ENCODE measurements at regions of chr1 and their contacts with region 1.

Region 1: DNA sequence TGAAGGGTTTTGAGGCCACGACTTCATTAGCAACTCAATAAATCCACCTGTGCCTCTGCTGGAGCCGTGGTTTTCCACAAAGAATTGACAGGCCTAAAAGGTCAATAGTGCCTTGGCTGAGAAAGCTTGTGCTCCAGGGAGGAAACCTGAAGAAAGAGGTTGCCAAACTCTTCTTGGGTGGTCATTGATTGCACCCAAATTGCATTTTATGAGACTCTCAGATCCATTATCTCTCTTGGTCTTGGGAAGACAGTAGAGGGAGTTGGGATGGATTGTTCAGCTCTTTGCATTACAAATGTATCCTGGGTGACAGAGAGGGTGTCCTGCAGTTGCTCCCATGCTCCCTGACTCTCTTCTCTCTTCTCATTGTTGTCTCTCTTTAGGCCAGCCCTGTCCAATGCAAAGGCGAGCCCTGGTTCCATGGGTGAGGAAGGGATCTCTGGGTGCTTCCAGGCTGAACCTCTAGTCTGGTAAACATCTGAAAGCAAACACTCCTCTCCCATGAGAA is 46.1 kb upstream of the HTR1D start:
- DNase-seq: no peak
- H3K4me3 ChIP-seq: no peak overlapping the region
- H3K27ac ChIP-seq: no peak overlapping the region
- H3K4me1 ChIP-seq: no peaks in the 10 kb centered on the region
- H3K27me3 ChIP-seq: no peaks in the 10 kb centered on the region
- CTCF ChIP-seq: no peak
- POLR2A ChIP-seq: no peak

Region 2: DNA sequence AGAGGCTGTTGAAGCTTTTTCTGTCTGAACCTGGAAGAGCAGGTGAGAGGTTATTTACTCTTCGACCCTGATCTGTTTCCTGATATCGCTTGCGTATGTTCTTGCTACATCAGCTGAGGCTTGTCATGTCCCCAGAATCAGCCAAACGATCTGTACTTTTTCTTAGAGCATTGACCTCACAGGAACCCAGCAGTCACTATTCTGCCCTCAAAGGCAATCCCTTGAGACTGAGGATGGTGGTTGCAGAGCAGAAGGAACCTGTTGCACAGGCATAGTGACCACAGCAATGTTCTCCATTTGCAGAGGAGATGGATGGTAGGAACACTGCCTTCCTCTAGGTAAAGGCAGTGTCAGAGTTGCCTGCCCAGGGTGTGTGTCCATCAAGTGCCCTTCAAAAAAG is 279.5 kb before region 1 on chr1:
- intact Hi-C with region 1: loop called (anchors 10 kb)
- DNase-seq: no peak
- H3K4me3 ChIP-seq: no peak overlapping the region
- H3K27ac ChIP-seq: no peak overlapping the region
- H3K4me1 ChIP-seq: no peaks in the 10 kb centered on the region
- H3K27me3 ChIP-seq: no peaks in the 10 kb centered on the region
- CTCF ChIP-seq: no peak
- POLR2A ChIP-seq: no peak

Region 3: DNA sequence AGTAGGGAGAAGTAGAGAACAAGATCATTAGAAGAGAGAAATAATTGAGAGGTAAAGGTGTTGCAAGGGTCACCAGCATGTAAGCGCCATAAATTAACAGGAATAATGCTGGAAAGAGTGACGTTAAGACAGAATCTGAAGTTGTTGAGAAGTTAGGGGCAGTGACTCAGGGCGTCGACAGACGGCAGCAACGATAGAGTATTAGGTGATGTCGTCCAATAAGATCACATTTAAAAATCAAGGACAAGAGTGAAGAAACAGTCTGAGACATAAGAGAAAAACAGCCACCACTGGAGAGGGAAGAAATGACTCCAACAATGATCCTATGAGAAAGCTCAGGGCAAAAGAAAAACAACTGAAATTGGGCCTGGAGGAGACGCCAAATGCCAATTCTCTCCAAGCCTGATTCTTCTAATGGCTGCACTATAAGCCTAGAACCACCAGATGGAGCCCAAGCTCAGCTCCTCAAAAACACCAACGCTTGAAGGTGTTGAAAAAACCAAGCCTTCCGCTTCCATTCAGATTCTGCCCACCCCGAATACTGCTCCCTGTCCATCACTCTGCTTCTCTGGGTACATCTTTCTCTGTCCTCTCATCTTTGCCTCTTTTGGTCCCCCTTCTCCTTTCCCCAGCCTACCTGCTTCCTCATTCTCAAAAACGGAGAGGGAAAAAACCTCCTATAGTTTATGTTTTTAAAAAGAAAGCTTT is 164.8 kb before region 1 on chr1:
- intact Hi-C with region 1: no loop called
- DNase-seq: no peak
- H3K4me3 ChIP-seq: no peak overlapping the region
- H3K27ac ChIP-seq: peak overlapping the region in 1 of 8 donors; percentile 75
- H3K4me1 ChIP-seq: peaks cover 40 to 59% (median 53%) of the 10 kb centered on the region in 6 donors
- H3K27me3 ChIP-seq: no peaks in the 10 kb centered on the region
- CTCF ChIP-seq: peak; percentile 84 to 97 (median 90)
- POLR2A ChIP-seq: no peak

Region 4: GRCh38 chr1:23369335-23370013 is 106.0 kb after region 1 on chr1 and contains the start of gene ZNF436:
- intact Hi-C with region 1: no loop called
- DNase-seq: peak; percentile 78
- H3K4me3 ChIP-seq: peak within 1 kb of the TSS; percentile 63 to 92 (median 74)
- H3K27ac ChIP-seq: peak within 1 kb of the TSS; percentile 87 to 99 (median 96)
- H3K4me1 ChIP-seq: peaks cover 17 to 62% (median 46%) of the 10 kb centered on the region in 6 donors
- H3K27me3 ChIP-seq: no peaks in the 10 kb centered on the region
- CTCF ChIP-seq: no peak
- POLR2A ChIP-seq: peak in 1 of 3 donors; percentile 73
- total RNA-seq, gene ZNF436: 15.3 to 32.1 (median 20.3) TPM